ENCODE measurements at regions of chr14 and their contacts with region 1.

Region 1: GRCh38 chr14:52950898-52951689 is at the start of gene FERMT2:
- DNase-seq: peak; percentile 84
- H3K4me3 Mint-ChIP-seq: peak within 1 kb of the TSS; percentile 94
- H3K27ac Mint-ChIP-seq: peak within 1 kb of the TSS; percentile 90
- H3K4me1 Mint-ChIP-seq: peaks cover 16% of the 10 kb centered on the region
- H3K27me3 Mint-ChIP-seq: no peaks in the 10 kb centered on the region
- CTCF ChIP-seq: no peak
- total RNA-seq, gene FERMT2: 62.2 and 62.7 TPM in 2 replicates

Region 2: DNA sequence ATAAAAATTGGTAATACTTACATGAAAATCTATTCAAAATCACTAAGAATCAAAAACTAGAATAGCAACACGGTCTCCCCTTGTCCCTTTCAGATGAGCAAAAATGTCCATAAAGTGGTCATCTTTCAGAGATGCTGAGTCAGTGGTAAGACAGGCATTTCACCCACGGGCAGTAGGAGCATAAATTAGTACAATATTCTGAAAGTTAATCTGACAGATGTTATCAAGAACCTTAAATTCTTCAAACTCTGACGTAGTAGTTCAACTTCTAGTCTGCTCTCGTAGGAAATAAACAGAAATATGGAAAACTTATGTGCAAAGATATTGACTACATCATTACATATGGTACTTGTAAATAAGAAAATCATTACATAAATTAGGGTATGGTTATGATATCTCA is 126.6 kb before region 1 on chr14:
- CTCF ChIA-PET with region 1: interaction called, 10 read pairs
- POLR2A ChIA-PET with region 1: interaction called, 10 read pairs
- intact Hi-C with region 1: no loop called
- DNase-seq: no peak
- H3K4me3 Mint-ChIP-seq: no peak overlapping the region
- H3K27ac Mint-ChIP-seq: no peak overlapping the region
- H3K4me1 Mint-ChIP-seq: no peaks in the 10 kb centered on the region
- H3K27me3 Mint-ChIP-seq: no peaks in the 10 kb centered on the region
- CTCF ChIP-seq: no peak

Region 3: DNA sequence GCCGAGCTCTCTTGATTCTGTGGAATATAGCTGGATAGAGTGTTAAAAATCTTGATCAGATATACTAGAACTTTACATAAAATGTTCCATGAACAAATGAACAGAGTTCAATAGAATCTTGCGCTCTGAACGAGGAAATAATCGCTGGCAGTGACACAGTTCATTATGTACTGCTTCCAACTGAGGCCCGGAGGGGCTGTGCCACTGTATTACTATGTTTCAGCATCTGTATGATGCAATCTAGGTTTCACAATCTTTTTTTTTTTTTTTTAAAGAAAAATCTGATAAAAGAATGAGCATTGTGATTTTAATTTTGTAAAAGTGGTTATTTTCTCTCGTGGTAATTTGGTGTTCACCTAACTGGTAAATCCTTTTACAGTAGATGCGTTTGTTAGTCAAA is 77.4 kb before region 1 on chr14:
- CTCF ChIA-PET with region 1: interaction called, 4 read pairs
- POLR2A ChIA-PET with region 1: interaction called, 38 read pairs
- intact Hi-C with region 1: loop called (anchors 1 kb)
- DNase-seq: peak; percentile 79
- H3K4me3 Mint-ChIP-seq: peak overlapping the region; percentile 57
- H3K27ac Mint-ChIP-seq: peak overlapping the region; percentile 96
- H3K4me1 Mint-ChIP-seq: peaks cover 49% of the 10 kb centered on the region
- H3K27me3 Mint-ChIP-seq: no peaks in the 10 kb centered on the region
- CTCF ChIP-seq: no peak

Region 4: GRCh38 chr14:52906071-52906601 is 45.0 kb before region 1 on chr14:
- CTCF ChIA-PET with region 1: interaction called, 8 read pairs
- POLR2A ChIA-PET with region 1: interaction called, 20 read pairs
- intact Hi-C with region 1: no loop called
- DNase-seq: peak; percentile 81
- H3K4me3 Mint-ChIP-seq: peak overlapping the region; percentile 44
- H3K27ac Mint-ChIP-seq: peak overlapping the region; percentile 77
- H3K4me1 Mint-ChIP-seq: peaks cover 54% of the 10 kb centered on the region
- H3K27me3 Mint-ChIP-seq: no peaks in the 10 kb centered on the region
- CTCF ChIP-seq: no peak

Region 5: GRCh38 chr14:52923902-52924575 is 27.1 kb before region 1 on chr14:
- CTCF ChIA-PET with region 1: interaction called, 9 read pairs
- POLR2A ChIA-PET with region 1: interaction called, 16 read pairs
- intact Hi-C with region 1: no loop called
- DNase-seq: no peak
- H3K4me3 Mint-ChIP-seq: no peak overlapping the region
- H3K27ac Mint-ChIP-seq: peak overlapping the region; percentile 70
- H3K4me1 Mint-ChIP-seq: peaks cover 56% of the 10 kb centered on the region
- H3K27me3 Mint-ChIP-seq: no peaks in the 10 kb centered on the region
- CTCF ChIP-seq: no peak

Region 6: GRCh38 chr14:52961060-52961639 is 10.1 kb after region 1 on chr14:
- CTCF ChIA-PET with region 1: interaction called, 20 read pairs
- POLR2A ChIA-PET with region 1: interaction called, 17 read pairs
- intact Hi-C with region 1: no loop called
- DNase-seq: peak; percentile 75
- H3K4me3 Mint-ChIP-seq: no peak overlapping the region
- H3K27ac Mint-ChIP-seq: no peak overlapping the region
- H3K4me1 Mint-ChIP-seq: peaks cover 11% of the 10 kb centered on the region
- H3K27me3 Mint-ChIP-seq: no peaks in the 10 kb centered on the region
- CTCF ChIP-seq: peak; percentile 64